GM13977 (cell line): ENCODE measurements at regions of chr6 and their contacts with region 1.

Region 1: GRCh38 chr6:110682460-110682853 is 132.8 kb downstream of the CDK19 start:
- DNase-seq: peak; percentile 66
- CTCF ChIP-seq: peak; percentile 59

Region 2: DNA sequence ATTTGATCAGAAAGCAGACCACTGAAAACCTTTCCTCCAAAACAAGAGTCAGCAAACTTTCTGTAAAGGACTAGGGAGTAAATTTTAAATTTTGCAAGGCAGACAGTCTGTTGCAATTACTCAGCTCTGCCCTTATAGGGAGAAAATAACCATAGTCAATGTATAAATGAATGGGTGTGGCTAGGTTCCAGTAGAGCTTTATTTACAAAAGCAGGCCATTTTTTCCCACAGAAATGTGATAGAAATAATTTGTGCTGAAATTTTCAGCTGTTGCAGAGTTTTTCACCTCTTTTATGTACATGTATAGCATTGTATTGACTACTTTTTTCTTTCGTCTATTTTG is 199.8 kb after region 1 on chr6:
- in situ Hi-C with region 1: loop called (anchors 10 kb)
- DNase-seq: no peak
- CTCF ChIP-seq: no peak

Region 3: GRCh38 chr6:110981202-110981600 is 298.7 kb after region 1 on chr6:
- in situ Hi-C with region 1: no loop called
- DNase-seq: no peak
- CTCF ChIP-seq: no peak